ENCODE measurements at regions of chr15 and their contacts with region 1.

Region 1: GRCh38 chr15:32994810-32995424 is 199.6 kb downstream of the FMN1 start:
- DNase-seq: no peak
- H3K4me3 ChIP-seq: no peak overlapping the region
- H3K27ac ChIP-seq: no peak overlapping the region
- H3K4me1 ChIP-seq: peaks cover 0 to 12% (median 3%) of the 10 kb centered on the region in 4 donors
- H3K27me3 ChIP-seq: no peaks in the 10 kb centered on the region
- CTCF ChIP-seq: peak in 3 of 4 experiments; percentile 40 to 62 (median 56)
- EP300 ChIP-seq: no peak
- POLR2A ChIP-seq: no peak

Region 2: GRCh38 chr15:32844118-32844711 is 150.7 kb before region 1 on chr15:
- intact Hi-C with region 1: loop called (anchors 10 kb)
- DNase-seq: no peak
- H3K4me3 ChIP-seq: no peak overlapping the region
- H3K27ac ChIP-seq: no peak overlapping the region
- H3K4me1 ChIP-seq: no peaks in the 10 kb centered on the region
- H3K27me3 ChIP-seq: no peaks in the 10 kb centered on the region
- CTCF ChIP-seq: peak in 3 of 4 experiments; percentile 34 to 60 (median 44)
- EP300 ChIP-seq: no peak
- POLR2A ChIP-seq: no peak